GM12878 (cell line): ENCODE measurements at regions of chr1 and their contacts with region 1.

Region 1: DNA sequence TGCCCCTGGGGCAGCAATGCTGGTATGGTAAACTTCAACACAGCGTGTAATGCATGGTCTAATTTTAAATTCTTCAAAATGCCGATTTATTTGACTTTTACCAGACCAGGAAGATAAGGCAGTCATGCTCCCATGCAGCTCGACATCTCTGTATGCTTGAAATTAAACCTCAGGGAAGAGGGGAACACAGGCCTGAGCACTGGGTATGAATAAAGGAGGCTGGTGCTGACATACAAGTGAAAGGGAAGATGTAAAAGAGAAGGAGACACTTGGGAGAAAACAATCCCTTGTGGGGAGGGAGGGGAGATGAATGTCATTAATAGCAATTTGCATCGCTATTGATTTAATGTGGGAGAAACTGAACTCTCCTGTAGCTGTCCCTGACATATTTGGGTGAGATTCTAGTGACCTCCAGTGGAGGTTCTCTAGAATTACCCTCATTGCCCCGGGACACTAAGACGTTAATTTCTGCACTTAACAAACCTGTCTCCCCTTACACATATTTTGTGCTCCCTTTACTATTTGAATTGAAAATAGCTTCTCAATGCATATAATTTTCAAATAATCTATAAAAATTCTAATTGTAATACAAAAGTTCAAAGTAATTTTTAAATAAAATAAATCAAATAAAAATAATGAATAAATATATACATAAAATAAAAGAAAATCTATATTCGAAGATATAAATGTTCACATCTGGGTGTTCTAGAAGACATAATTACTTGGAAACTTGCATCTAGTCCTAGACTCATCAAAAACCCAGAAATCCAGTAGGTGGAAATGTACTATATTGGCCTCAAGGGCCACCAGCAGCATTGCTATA is 283.1 kb downstream of the LMX1A start:
- DNase-seq: no peak
- ATAC-seq: peak; percentile 84
- H3K4me3 ChIP-seq: no peak overlapping the region
- H3K27ac ChIP-seq: no peak overlapping the region
- H3K4me1 ChIP-seq: no peaks in the 10 kb centered on the region
- H3K27me3 ChIP-seq: no peaks in the 10 kb centered on the region
- CTCF ChIP-seq: peak; percentile 53 to 68 (median 54); a peak in 5 of 6 replicates
- EP300 ChIP-seq: no peak
- POLR2A ChIP-seq: no peak
- RAD21 ChIP-seq: peak; percentile 69

Region 2: DNA sequence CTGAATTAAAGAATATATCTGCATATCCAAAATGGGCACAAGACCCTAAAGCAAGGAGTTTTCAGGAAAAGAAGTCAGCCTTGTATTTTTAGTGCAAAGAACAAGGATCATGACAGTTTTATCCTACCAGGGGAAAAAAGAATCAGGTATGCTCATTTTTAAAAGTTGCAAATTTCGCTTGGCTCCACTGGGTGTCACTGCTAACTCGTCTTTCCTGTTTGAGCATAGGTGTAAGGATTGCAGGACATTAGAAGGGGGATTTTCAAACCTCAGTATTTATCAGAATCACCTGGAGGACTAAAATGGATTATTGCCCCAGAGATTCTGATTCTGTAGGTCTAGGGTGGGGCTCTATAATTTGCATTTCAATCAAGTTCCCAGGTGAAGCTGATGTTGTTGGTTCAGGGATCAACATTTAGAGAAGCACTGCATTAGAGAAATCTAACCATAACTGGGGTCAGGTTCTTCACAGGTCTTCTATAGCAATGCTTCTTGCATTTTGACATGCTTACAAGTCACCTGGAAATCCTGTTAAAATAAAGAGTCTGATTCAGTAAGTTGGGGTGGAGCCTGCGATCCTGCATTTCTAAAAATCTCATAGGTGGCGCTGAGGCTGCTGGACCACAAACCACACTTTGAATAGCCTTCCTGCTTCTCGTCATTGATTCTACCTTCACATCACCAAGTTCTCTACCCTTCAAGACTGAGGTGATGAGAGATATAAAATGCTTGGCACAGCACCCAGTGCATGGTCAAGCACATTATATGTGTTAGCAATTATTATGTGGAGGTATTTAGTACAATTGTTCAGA is 1712.1 kb before region 1 on chr1:
- CTCF ChIA-PET with region 1: no interaction called
- POLR2A ChIA-PET with region 1: no interaction called
- RAD21 ChIA-PET with region 1: interaction called, 4 read pairs
- SMC1A ChIA-PET with region 1: interaction called, 3 read pairs
- in situ Hi-C with region 1: no loop called
- intact Hi-C with region 1: loop called (anchors 5 kb)
- DNase-seq: no peak
- ATAC-seq: peak; percentile 78
- H3K4me3 ChIP-seq: no peak overlapping the region
- H3K27ac ChIP-seq: no peak overlapping the region
- H3K4me1 ChIP-seq: no peaks in the 10 kb centered on the region
- H3K27me3 ChIP-seq: no peaks in the 10 kb centered on the region
- CTCF ChIP-seq: peak; percentile 39 to 59 (median 53); a peak in 5 of 6 replicates
- EP300 ChIP-seq: no peak
- POLR2A ChIP-seq: no peak
- RAD21 ChIP-seq: peak; percentile 63

Region 3: DNA sequence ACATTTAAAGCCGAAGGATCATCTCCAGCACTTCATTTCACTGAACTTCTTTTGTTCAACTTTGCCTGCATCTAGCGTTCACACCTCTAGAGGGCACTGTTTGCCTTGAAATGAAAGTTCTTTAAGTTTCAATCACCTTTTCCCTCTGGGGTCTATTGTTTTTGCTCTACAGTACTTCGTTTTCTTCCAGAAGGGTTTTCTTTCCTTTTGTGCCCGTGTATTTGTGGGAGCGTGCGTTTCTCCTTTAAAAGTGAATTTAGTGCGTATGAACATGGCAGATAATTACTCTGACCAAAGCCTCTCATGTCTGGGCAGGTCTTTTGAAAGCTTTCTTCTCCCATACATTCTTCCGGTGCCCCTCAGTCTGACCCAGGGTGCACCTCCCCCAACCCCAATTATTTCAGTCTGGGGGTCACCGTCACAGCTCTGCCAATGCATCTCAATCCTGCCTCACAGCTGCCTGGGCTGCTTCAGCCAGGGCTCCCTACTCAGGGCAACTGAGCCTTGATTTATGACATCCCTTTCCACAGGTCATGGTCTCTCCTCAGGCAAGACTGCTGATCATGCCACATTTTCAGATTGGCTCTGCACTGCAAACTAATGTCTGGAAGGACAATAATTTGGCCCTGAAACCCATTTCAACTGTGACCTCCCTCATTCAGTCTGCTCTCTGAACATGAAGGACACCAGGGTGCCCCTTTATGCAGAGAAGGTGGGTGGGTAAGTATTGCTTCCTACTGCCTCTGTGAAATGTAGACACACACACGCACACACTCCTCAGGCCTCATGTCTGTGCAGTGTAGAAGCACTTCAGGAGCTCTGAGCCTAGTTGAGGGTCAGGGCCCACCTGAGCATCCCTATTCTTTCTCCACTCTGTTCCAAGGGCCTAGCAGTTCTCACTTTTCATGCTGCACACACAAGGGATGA is 1663.1 kb before region 1 on chr1:
- CTCF ChIA-PET with region 1: interaction called, 3 read pairs
- POLR2A ChIA-PET with region 1: no interaction called
- RAD21 ChIA-PET with region 1: interaction called, 3 read pairs
- SMC1A ChIA-PET with region 1: interaction called, 3 read pairs
- in situ Hi-C with region 1: loop called (anchors 10 kb)
- intact Hi-C with region 1: loop called (anchors 5 kb)
- DNase-seq: no peak
- ATAC-seq: peak; percentile 55
- H3K4me3 ChIP-seq: no peak overlapping the region
- H3K27ac ChIP-seq: no peak overlapping the region
- H3K4me1 ChIP-seq: peaks cover 9% of the 10 kb centered on the region
- H3K27me3 ChIP-seq: no peaks in the 10 kb centered on the region
- CTCF ChIP-seq: peak; percentile 73 to 84 (median 82)
- EP300 ChIP-seq: no peak
- POLR2A ChIP-seq: no peak
- RAD21 ChIP-seq: peak; percentile 91

Region 4: DNA sequence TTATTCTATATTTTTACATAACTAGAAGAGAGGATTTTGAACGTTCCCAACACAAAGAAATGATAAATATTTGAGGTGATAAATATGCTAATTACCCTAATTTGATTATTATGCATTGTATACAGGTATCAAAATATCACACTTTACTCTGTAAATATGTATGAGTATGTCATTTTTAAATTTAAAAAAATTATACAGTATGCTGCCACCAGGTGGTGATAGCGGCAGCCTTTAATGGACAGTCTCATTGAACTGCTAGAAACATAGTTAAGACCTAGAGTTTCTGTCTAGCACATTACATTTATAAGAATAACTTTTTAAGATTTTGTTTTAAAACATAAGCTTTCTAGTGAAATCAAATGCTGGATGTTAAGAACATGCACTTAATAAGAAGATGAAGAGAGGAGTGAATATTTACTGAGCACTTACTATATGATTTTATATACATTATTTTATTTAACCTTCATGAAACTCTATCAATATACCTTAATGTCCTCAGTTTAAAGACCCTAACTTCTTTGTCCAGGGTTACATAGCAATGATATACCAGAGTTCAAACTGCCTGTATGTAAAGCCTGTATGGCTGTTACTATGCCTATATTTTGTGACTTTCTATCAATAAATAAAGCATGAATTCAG is 1544.6 kb before region 1 on chr1:
- CTCF ChIA-PET with region 1: no interaction called
- POLR2A ChIA-PET with region 1: no interaction called
- RAD21 ChIA-PET with region 1: no interaction called
- SMC1A ChIA-PET with region 1: no interaction called
- in situ Hi-C with region 1: no loop called
- intact Hi-C with region 1: loop called (anchors 5 kb)
- DNase-seq: no peak
- ATAC-seq: peak; percentile 77
- H3K4me3 ChIP-seq: no peak overlapping the region
- H3K27ac ChIP-seq: no peak overlapping the region
- H3K4me1 ChIP-seq: no peaks in the 10 kb centered on the region
- H3K27me3 ChIP-seq: no peaks in the 10 kb centered on the region
- CTCF ChIP-seq: peak; percentile 44 to 52 (median 48)
- EP300 ChIP-seq: no peak
- POLR2A ChIP-seq: no peak
- RAD21 ChIP-seq: peak; percentile 63

Region 5: GRCh38 chr1:164886101-164886500 is 187.3 kb before region 1 on chr1:
- CTCF ChIA-PET with region 1: no interaction called
- POLR2A ChIA-PET with region 1: no interaction called
- RAD21 ChIA-PET with region 1: interaction called, 4 read pairs
- SMC1A ChIA-PET with region 1: no interaction called
- in situ Hi-C with region 1: no loop called
- intact Hi-C with region 1: loop called (anchors 10 kb)
- DNase-seq: no peak
- ATAC-seq: no peak
- H3K4me3 ChIP-seq: no peak overlapping the region
- H3K27ac ChIP-seq: no peak overlapping the region
- H3K4me1 ChIP-seq: no peaks in the 10 kb centered on the region
- H3K27me3 ChIP-seq: no peaks in the 10 kb centered on the region
- CTCF ChIP-seq: no peak
- EP300 ChIP-seq: no peak
- POLR2A ChIP-seq: no peak
- RAD21 ChIP-seq: no peak

Region 6: DNA sequence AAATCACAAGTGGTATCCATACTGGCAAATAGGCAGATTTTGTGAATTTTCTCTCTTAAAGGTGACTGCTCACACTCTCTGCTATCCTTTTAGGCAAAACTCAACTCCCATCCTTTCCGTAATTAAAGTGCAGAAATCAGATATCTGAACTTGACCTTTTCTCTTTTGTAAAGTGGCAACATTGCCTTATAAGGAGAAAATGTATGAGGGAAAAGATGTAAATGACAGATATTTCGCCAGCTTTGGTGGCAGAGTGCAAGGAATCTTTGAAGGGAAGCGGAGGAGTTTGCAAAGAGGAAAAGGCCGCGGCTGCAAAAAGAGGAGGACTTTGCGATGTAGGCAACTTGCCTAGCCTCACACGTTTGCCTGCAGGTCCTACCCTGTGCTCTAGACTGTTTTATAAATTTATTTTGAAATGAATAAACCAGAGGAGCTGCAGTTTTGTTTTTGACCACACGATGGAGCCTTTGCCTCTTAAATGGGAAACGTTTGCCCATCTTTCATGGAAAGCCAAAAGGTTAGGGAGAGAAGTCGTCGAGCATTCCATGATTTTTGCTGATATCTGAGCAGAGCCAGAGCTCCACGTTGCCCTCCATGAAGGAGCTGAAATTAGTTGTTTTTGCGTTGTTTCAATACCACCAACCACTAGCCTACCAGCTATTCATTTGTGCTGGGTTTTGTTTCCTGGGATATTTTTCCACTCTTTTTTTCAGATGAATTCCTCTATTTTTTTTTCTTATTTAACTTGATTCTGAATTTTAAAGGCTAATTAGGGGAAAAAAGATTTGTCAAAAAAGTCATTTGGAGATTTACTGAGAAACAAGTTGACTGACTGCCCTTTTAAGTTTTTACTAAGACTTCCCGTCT is 40.9 kb after region 1 on chr1:
- CTCF ChIA-PET with region 1: no interaction called
- POLR2A ChIA-PET with region 1: no interaction called
- RAD21 ChIA-PET with region 1: no interaction called
- SMC1A ChIA-PET with region 1: no interaction called
- in situ Hi-C with region 1: no loop called
- intact Hi-C with region 1: no loop called
- DNase-seq: no peak
- ATAC-seq: peak; percentile 31; the same call in 1 of the 3 replicates
- H3K4me3 ChIP-seq: no peak overlapping the region
- H3K27ac ChIP-seq: no peak overlapping the region
- H3K4me1 ChIP-seq: no peaks in the 10 kb centered on the region
- H3K27me3 ChIP-seq: peaks cover 3 to 6% of the 10 kb centered on the region in 2 experiments; a peak in 2 of 4 replicates
- CTCF ChIP-seq: peak; percentile 54 to 70 (median 68); a peak in 5 of 6 replicates
- EP300 ChIP-seq: no peak
- POLR2A ChIP-seq: no peak
- RAD21 ChIP-seq: peak; percentile 57